Aorta (tissue), 5 donors: ENCODE measurements at regions of chr6 and their contacts with region 1.

Region 1: DNA sequence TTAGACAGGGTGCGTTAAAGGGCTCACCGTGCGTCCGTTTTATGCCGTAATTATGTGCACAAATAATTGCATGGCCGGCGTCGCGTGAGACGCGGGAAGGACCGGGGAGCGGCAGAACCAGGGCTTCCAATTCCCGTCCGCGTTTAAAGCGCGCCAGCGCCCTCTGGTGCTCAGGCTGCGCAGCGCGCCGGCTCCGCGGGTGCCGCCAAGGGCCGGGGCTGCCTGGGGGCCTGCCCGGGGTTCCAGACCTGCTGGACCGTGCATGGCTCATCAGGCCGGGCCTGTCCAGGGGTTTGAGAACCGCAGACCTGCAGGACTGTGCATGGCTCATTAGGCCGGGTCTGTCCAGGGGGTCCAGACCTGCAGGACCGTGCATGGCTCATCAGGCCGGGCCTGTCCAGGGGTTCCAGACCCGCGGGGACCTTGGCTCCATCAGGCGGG is 369.0 kb downstream of the THBS2 start:
- DNase-seq: peak; percentile 77 to 92
- ATAC-seq: peak; percentile 90
- H3K4me3 ChIP-seq: no peak overlapping the region
- H3K27ac ChIP-seq: no peak overlapping the region
- H3K4me1 ChIP-seq: no peaks in the 10 kb centered on the region
- H3K27me3 ChIP-seq: no peaks in the 10 kb centered on the region

Region 2: DNA sequence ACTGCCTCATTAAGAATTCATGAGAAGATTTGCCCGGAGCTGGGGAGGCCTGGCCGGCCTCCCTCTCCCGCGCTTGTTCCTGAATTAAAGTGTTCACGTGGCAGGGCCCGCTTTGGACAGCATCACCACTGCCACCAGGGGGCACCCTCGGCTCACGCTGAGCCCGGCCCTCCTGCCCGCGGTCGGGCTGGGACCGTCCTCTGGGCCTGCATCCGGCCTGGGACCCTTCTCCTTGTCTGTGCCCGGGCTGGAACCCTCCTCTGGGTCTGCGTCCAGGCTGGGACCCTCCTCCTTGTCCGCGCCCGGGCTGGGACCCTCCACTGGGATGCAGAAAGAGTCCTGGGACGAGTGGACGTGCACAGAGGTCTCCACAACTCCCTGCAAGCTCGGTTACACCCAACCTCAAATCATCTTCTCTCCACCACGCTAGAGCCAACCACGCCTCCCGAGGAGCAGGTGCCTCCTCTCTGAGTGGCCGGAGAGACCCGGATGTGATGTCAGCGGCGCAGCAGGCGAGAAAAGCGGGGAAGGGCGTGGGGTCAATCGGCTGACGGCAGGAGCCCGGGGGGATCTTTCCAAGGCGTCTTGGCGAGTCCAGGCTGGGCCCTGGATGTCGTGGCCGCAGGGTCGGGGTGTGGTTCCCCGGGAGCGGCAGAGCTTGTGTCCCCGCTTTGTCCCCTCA is 514.2 kb before region 1 on chr6:
- intact Hi-C with region 1: loop called (anchors 1 to 2 kb)
- DNase-seq: peak; percentile 83 to 96
- ATAC-seq: peak; percentile 82
- H3K4me3 ChIP-seq: no peak overlapping the region
- H3K27ac ChIP-seq: no peak overlapping the region
- H3K4me1 ChIP-seq: no peaks in the 10 kb centered on the region
- H3K27me3 ChIP-seq: no peaks in the 10 kb centered on the region

Region 3: GRCh38 chr6:168616816-168617765 is 267.6 kb before region 1 on chr6:
- intact Hi-C with region 1: loop called (anchors 2 kb)
- DNase-seq: peak in 1 of 2 donors; percentile 75
- ATAC-seq: peak; percentile 78
- H3K4me3 ChIP-seq: no peak overlapping the region
- H3K27ac ChIP-seq: no peak overlapping the region
- H3K4me1 ChIP-seq: no peaks in the 10 kb centered on the region
- H3K27me3 ChIP-seq: no peaks in the 10 kb centered on the region